ENCODE measurements at regions of chr13 and their contacts with region 1.

Region 1: DNA sequence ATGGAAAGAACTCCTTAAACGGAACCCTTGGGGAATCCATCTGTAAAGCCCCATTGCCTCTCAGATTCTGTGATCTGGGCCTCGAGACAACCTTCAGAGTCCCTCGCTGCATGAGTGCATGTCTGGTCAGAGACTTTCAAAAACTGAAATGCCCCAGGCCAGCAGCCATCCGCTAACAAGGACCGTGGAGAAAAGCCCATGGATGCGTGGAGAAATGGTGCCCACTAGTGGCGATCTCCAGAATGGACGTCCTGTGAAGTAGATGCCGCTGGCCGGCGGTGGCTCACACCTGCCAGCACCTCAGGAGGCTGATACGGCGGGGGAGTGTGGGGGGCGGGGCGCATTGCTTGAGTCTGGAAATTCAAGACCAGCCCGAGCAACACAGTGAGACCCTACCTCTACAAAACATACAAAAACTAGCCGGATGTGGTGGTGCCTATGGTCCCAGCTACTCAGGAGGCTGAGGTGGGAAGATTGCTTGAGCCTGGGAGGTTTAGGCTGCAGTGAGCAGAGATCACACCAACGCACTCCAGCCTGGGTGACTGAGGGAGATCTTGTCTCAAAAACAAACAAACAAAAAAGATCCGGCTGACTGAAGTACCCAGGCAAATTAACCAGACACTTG is 7.9 kb upstream of the CDC16 start:
- DNase-seq: peak; percentile 93
- ATAC-seq: peak; percentile 91
- H3K4me3 Mint-ChIP-seq: no peak overlapping the region
- H3K27ac Mint-ChIP-seq: peak overlapping the region; percentile 65
- H3K4me1 Mint-ChIP-seq: peaks cover 52% of the 10 kb centered on the region
- H3K27me3 Mint-ChIP-seq: no peaks in the 10 kb centered on the region

Region 2: DNA sequence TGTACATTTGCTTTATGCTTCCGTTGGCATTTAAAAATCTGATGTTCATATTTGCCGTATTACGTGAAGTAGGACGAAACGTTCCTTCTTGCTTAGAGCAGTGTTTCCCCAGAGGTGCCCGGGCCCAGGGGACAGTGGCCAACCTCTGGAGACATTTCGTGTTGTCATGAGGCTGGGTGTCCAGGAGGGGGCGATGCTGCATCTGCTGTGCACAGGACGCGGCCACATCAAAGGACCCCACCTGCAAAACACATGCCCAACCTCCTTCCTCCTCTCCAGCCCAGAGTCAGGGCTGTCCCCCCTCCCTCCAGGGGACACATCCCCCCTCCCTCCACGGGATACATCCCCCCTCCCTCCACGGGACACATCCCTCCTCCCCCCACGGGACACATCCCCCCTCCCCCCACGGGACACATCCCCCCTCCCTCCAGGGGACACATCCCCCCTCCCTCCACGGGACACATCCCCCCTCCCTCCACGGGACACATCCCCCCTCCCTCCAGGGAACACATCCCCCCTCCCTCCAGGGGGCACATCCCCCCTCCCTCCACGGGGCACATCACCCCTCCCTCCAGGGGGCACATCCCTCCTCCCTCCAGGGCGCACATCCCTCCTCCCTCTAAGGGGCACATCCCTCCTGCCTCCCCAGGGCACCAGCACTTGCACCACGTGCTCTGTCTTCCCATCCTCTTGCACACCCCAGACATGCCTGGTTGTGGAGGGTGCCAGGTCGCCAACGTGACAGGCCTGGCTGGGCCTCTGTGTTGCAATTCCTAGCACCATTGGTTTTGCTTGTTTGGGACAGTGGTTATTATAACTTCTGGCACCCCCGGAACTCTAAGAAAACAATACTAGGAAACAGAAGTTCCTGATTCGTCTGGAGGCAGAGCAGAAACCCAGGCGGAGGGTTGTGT is 409.6 kb before region 1 on chr13:
- CTCF ChIA-PET with region 1: no interaction called
- POLR2A ChIA-PET with region 1: no interaction called
- intact Hi-C with region 1: loop called (anchors 1 kb)
- DNase-seq: peak; percentile 95
- ATAC-seq: peak; percentile 85
- H3K4me3 Mint-ChIP-seq: peak overlapping the region; percentile 96
- H3K27ac Mint-ChIP-seq: no peak overlapping the region
- H3K4me1 Mint-ChIP-seq: peaks cover 21% of the 10 kb centered on the region
- H3K27me3 Mint-ChIP-seq: no peaks in the 10 kb centered on the region

Region 3: DNA sequence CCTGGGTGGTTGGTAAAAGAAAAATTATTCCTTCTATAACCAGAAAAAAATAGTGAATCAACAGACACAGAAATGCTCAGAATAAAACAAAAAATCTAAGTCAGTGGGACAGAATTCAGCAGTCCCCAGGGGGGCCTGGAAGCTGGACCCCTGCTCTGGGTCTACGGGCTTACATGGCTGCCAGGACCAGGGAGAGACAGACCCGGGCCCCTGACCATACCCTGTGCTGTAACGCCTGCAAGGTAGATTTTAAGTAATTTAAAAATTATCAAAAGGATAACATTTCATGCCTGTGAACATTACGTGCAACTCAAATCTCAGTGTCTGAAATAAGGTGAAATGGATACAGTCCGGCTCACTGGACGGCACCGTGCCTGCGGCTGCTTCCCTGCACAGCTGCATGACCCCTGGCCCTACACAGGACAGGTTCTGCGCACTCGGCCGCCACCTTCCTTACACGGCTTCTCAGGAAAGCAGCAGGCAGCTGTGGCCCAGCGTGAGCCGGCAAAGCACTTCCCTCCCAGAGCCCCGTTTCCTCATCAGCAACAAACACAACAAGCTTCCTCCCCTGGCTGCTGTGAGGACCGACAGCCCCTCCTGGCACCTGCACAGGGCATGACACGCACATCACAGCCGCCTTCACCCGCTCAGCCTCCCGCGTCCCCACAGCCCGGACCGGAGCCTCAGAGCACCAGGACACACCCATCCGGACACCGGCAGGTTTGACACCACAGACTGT is 116.6 kb before region 1 on chr13:
- CTCF ChIA-PET with region 1: interaction called, 13 read pairs
- POLR2A ChIA-PET with region 1: no interaction called
- intact Hi-C with region 1: loop called in 1 of 2 experiments (anchors 1 kb)
- DNase-seq: peak; percentile 85
- ATAC-seq: peak; percentile 82
- H3K4me3 Mint-ChIP-seq: peak overlapping the region; percentile 74
- H3K27ac Mint-ChIP-seq: peak overlapping the region; percentile 90
- H3K4me1 Mint-ChIP-seq: peaks cover 81% of the 10 kb centered on the region
- H3K27me3 Mint-ChIP-seq: no peaks in the 10 kb centered on the region

Region 4: DNA sequence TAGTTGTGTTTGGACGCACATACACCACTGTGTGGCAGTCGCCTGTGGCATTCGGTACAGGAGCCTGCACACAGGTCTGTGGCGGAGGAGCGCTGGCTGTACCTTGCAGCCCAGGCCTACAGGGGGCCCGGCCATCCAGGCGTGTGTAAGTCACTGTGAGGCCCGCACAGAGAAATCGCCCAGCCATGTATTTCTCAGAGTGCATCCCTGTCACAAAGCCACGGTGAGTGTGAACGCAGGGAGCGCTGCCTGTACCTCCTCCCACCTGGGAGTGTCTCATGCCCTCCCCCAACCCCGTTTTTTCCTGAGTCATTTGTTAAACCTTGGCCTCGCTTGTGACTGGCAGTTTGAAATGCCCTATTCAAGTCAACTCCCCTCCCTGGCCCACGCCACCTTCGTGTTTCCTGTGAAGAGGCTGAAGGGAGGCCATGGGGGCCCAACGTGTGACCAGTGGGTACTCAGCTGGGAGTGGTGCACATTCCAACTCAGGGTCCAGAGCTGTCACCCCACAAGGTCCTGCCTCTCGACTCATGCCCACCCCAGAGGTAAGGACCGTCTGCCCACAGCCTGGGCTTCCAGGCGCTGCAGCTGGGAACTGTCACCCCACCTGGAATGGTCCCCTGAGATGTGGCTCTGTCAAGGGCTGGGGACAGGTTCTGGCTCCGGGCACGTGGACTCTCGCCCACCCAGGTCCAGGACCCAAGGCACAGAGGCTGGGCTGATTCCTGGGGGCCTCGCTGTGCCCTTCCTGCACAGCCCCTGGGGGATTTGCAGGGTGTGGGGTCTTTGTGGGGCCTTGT is 82.8 kb before region 1 on chr13:
- CTCF ChIA-PET with region 1: interaction called, 4 read pairs
- POLR2A ChIA-PET with region 1: no interaction called
- intact Hi-C with region 1: loop called (anchors 2 kb)
- DNase-seq: peak; percentile 76
- ATAC-seq: peak; percentile 47
- H3K4me3 Mint-ChIP-seq: no peak overlapping the region
- H3K27ac Mint-ChIP-seq: peak overlapping the region; percentile 39
- H3K4me1 Mint-ChIP-seq: peaks cover 12% of the 10 kb centered on the region
- H3K27me3 Mint-ChIP-seq: no peaks in the 10 kb centered on the region

Region 5: GRCh38 chr13:114173745-114174144 is 53.1 kb before region 1 on chr13:
- CTCF ChIA-PET with region 1: no interaction called
- POLR2A ChIA-PET with region 1: no interaction called
- intact Hi-C with region 1: no loop called
- DNase-seq: no peak
- ATAC-seq: peak; percentile 49
- H3K4me3 Mint-ChIP-seq: no peak overlapping the region
- H3K27ac Mint-ChIP-seq: no peak overlapping the region
- H3K4me1 Mint-ChIP-seq: peaks cover 25% of the 10 kb centered on the region
- H3K27me3 Mint-ChIP-seq: no peaks in the 10 kb centered on the region